IMR-90 (cell line): ENCODE measurements at regions of chr16 and their contacts with region 1.

Region 1: DNA sequence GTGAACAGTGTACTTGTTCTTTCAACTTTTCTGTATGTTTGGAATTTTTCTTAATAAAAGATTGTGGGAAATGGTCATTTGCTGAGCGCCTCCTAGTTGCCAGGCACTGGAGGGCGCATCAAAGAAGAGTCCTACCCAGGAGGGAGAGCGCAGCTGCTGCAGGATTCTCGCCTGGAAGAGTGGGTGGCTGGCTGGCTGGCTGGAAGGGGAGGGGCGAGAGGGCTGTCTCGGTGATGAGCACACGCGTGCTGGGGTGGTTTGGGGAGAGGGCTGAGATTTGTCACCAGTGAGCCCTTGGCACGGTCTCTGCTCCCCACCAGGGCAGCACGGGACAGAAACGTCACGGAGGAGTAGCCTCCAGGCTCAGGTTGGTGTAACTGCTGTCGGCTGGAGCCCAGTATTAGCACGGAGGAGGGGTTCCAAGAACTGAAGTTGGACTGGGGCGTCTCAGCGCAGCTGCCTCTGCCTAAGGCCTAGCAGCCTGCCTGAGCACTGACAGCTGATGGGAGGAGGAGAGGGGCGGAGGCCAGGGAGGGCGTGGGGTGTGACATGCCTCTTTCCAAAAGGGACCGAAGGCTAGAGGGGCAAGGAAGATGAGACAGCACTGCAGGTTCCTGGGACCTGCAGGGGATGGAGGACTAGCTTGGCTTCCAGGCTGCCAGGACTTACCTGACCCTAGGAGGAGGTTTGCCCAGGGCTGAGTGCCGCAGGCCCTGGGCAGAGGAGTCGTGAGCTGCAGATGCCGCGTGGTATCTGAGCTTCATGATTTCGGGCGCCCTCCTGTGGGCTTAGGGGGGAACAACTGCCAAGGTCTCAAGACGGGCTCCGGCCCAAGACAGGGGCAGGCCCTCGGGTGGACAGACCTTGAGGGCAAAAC is 5.7 kb downstream of the LDHD start:
- DNase-seq: peak; percentile 89
- ATAC-seq: peak; percentile 81
- H3K4me3 ChIP-seq: peak overlapping the region; percentile 8; the same call in 1 of the 2 replicates
- H3K27ac ChIP-seq: peak overlapping the region; percentile 57
- H3K4me1 ChIP-seq: peaks cover 41% of the 10 kb centered on the region
- H3K27me3 ChIP-seq: no peaks in the 10 kb centered on the region
- CTCF ChIP-seq: peak; percentile 95
- POLR2A ChIP-seq: peak; percentile 19; the same call in 1 of the 2 replicates
- RAD21 ChIP-seq: peak; percentile 95

Region 2: DNA sequence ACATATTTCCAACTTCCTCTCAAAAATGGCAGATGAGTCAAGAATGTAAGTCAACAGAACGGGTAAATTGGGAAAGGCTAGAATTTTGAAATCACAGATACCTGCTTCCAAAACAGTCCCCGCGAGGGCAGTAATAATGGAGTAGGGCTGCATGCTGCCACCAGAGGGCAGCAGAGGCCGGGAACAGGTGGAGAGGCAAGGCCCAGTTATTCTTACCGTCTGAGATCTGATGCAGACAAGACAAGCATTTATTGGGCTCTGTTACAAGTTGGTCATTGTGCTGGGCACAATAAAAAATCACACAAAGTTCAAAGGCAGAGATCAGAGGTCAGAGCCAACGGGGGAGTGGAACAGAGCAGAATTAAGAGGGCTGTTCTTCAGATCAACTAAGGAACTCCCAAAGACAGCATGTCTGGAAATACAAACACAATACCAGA is 401.4 kb before region 1 on chr16:
- CTCF ChIA-PET with region 1: no interaction called
- POLR2A ChIA-PET with region 1: no interaction called
- dilution Hi-C with region 1: no loop called
- in situ Hi-C with region 1: no loop called
- intact Hi-C with region 1: loop called (anchors 1 kb)
- DNase-seq: peak; percentile 72
- ATAC-seq: peak; percentile 99
- H3K4me3 ChIP-seq: no peak overlapping the region
- H3K27ac ChIP-seq: no peak overlapping the region
- H3K4me1 ChIP-seq: no peaks in the 10 kb centered on the region
- H3K27me3 ChIP-seq: peaks cover 8% of the 10 kb centered on the region; the same call in 1 of the 2 replicates
- CTCF ChIP-seq: peak; percentile 98
- POLR2A ChIP-seq: 0 out of 2 replicates have a peak, but pooled peaks have one; percentile 29
- RAD21 ChIP-seq: peak; percentile 99

Region 3: GRCh38 chr16:74813109-74813641 is 297.7 kb before region 1 on chr16:
- CTCF ChIA-PET with region 1: no interaction called
- POLR2A ChIA-PET with region 1: no interaction called
- dilution Hi-C with region 1: no loop called
- in situ Hi-C with region 1: no loop called
- intact Hi-C with region 1: loop called (anchors 5 kb)
- DNase-seq: peak; percentile 55
- ATAC-seq: peak; percentile 100
- H3K4me3 ChIP-seq: no peak overlapping the region
- H3K27ac ChIP-seq: no peak overlapping the region
- H3K4me1 ChIP-seq: no peaks in the 10 kb centered on the region
- H3K27me3 ChIP-seq: peaks cover 26% of the 10 kb centered on the region
- CTCF ChIP-seq: peak; percentile 82
- POLR2A ChIP-seq: no peak
- RAD21 ChIP-seq: peak; percentile 82

Region 4: DNA sequence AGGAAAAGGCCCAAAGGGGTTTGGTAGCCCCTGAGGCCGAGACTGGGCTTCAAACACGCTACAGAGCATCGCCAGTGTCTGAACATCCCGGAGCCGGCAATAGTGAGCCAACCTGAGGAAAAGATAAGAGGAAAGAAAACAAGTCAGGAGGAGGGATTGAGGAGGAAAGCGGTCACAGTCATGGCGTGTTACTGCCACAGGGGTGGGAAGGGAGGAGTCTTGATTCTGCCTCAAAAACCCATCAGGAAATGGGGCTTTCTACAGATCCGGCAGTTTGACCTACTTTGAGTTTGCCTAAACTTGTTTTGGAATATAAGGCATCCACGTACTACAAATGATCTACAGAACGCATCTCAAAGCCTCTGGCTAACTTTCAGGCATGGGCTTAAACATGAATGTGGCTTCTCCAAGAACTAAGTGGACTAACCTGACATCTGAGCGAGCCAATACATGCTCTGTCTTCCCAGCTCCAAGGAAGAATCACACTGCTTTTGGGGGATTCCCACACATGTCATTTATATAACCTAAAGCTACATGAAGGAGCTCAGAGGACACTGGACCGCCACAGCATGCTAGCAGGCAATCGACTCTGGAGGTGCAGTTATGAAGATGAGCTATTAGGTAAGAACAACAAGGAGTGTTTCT is 222.5 kb before region 1 on chr16:
- CTCF ChIA-PET with region 1: interaction called, 3 read pairs
- POLR2A ChIA-PET with region 1: no interaction called
- dilution Hi-C with region 1: no loop called
- in situ Hi-C with region 1: no loop called
- intact Hi-C with region 1: loop called (anchors 1 kb)
- DNase-seq: no peak
- ATAC-seq: no peak
- H3K4me3 ChIP-seq: no peak overlapping the region
- H3K27ac ChIP-seq: no peak overlapping the region
- H3K4me1 ChIP-seq: peaks cover 4% of the 10 kb centered on the region; the same call in 1 of the 2 replicates
- H3K27me3 ChIP-seq: no peaks in the 10 kb centered on the region
- CTCF ChIP-seq: no peak
- POLR2A ChIP-seq: no peak
- RAD21 ChIP-seq: no peak

Region 5: DNA sequence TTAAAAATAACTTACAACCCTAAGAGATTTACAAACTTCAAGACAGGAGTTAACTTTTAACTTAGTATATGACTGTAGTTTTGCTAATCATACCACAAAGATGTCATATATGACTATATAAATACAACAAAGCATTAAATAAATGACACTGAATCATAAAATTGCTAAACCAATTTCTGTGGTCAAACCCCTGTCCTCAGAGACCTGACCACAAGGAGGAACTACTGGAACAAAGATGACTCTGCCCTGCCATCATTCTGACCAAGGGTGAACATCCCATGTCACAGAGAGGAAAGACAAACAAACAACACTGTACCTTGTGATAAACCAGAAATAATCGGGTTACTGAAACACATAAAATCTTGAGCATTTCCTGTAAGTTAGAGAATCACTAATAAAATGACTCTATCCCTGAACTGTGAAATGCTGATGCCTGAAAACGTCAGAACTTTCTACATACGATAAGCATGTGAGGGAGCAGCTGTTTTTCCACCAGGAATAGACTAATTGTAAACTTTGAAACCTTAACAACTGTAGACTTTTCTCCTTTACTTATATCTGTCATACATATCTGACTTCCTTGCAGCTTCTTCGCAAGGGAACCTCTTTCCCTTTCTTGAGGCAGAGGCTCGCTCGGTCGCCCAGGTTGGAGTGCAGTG is 173.8 kb before region 1 on chr16:
- CTCF ChIA-PET with region 1: interaction called, 4 read pairs
- POLR2A ChIA-PET with region 1: no interaction called
- dilution Hi-C with region 1: no loop called
- in situ Hi-C with region 1: no loop called
- intact Hi-C with region 1: loop called (anchors 1 kb)
- DNase-seq: peak; percentile 95
- ATAC-seq: peak; percentile 96
- H3K4me3 ChIP-seq: no peak overlapping the region
- H3K27ac ChIP-seq: no peak overlapping the region
- H3K4me1 ChIP-seq: peaks cover 2% of the 10 kb centered on the region; the same call in 1 of the 2 replicates
- H3K27me3 ChIP-seq: no peaks in the 10 kb centered on the region
- CTCF ChIP-seq: no peak
- POLR2A ChIP-seq: no peak
- RAD21 ChIP-seq: no peak

Region 6: GRCh38 chr16:74998481-74999218 is 112.2 kb before region 1 on chr16 and contains the start of gene ZNRF1:
- CTCF ChIA-PET with region 1: interaction called, 15 read pairs
- POLR2A ChIA-PET with region 1: no interaction called
- dilution Hi-C with region 1: no loop called
- in situ Hi-C with region 1: loop called (anchors 5 kb)
- intact Hi-C with region 1: loop called (anchors 1 kb)
- DNase-seq: peak; percentile 71
- ATAC-seq: peak; percentile 91
- H3K4me3 ChIP-seq: peak within 1 kb of the TSS; percentile 79
- H3K27ac ChIP-seq: peak within 1 kb of the TSS; percentile 62
- H3K4me1 ChIP-seq: peaks cover 10% of the 10 kb centered on the region
- H3K27me3 ChIP-seq: no peaks in the 10 kb centered on the region
- CTCF ChIP-seq: peak; percentile 73
- POLR2A ChIP-seq: 0 out of 2 replicates have a peak, but pooled peaks have one; percentile 10
- RAD21 ChIP-seq: peak; percentile 80
- total RNA-seq, gene ZNRF1: 8.2 and 9.7 TPM in 2 replicates